WTC11 (cell line): ENCODE measurements at regions of chr7 and their contacts with region 1.

Region 1: DNA sequence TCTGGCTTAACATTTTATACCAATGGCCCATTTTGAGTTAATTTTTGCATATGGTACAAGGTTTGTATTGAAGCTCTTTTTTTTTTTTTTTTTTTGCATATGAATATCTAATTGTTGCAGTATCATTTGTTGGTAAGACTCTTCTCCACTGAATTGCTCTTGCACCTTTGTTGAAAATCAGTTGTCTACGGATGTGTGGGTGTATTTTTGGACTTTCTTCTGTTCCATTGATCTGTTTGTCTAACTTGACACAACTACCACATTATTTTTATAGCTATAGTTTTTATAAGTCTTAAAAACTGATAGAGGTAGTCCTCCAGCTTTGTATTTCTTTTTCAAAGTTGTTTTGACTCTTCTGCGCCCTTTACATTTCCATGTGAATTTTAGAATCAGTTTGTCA is 53.9 kb downstream of the AHCYL2 start:
- DNase-seq: no peak
- ATAC-seq: no peak
- H3K4me3 Mint-ChIP-seq: no peak overlapping the region
- H3K27ac Mint-ChIP-seq: no peak overlapping the region
- H3K4me1 Mint-ChIP-seq: peaks cover 30% of the 10 kb centered on the region
- H3K27me3 Mint-ChIP-seq: no peaks in the 10 kb centered on the region
- CTCF ChIP-seq: no peak

Region 2: GRCh38 chr7:128322040-128322643 is 956.5 kb before region 1 on chr7:
- CTCF ChIA-PET with region 1: no interaction called
- POLR2A ChIA-PET with region 1: interaction called, 11 read pairs
- DNase-seq: no peak
- ATAC-seq: peak; percentile 76
- H3K4me3 Mint-ChIP-seq: no peak overlapping the region
- H3K27ac Mint-ChIP-seq: no peak overlapping the region
- H3K4me1 Mint-ChIP-seq: no peaks in the 10 kb centered on the region
- H3K27me3 Mint-ChIP-seq: no peaks in the 10 kb centered on the region
- CTCF ChIP-seq: no peak